Tibial artery (tissue), 4 donors: ENCODE measurements at regions of chr7 and their contacts with region 1.

Region 1: GRCh38 chr7:12434009-12434642 is 30.5 kb upstream of the VWDE start:
- DNase-seq: no peak
- H3K4me3 ChIP-seq: no peak overlapping the region
- H3K27ac ChIP-seq: no peak overlapping the region
- H3K4me1 ChIP-seq: no peaks in the 10 kb centered on the region
- H3K27me3 ChIP-seq: no peaks in the 10 kb centered on the region
- CTCF ChIP-seq: no peak

Region 2: DNA sequence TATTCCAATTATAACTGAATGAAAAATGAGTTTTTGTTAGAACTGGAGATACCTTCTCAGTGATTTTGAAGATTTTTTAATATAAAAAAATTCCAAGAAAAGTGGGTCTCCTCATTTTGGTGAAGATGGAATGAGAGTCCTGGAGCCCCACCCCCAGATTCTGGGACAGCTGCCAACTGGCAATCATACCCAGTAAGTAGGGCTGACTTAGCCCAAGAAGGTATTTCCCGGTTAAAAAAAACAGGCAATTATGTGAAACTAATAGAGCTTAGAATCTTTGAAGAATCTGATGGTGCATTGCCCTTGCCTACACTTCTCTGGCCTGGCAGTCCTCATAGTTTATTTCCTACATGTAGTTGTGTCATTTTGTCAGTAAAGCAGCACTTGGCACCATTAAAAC is 22.4 kb after region 1 on chr7:
- intact Hi-C with region 1: loop called (anchors 2 kb)
- DNase-seq: no peak
- H3K4me3 ChIP-seq: no peak overlapping the region
- H3K27ac ChIP-seq: no peak overlapping the region
- H3K4me1 ChIP-seq: no peaks in the 10 kb centered on the region
- H3K27me3 ChIP-seq: no peaks in the 10 kb centered on the region
- CTCF ChIP-seq: no peak

Region 3: DNA sequence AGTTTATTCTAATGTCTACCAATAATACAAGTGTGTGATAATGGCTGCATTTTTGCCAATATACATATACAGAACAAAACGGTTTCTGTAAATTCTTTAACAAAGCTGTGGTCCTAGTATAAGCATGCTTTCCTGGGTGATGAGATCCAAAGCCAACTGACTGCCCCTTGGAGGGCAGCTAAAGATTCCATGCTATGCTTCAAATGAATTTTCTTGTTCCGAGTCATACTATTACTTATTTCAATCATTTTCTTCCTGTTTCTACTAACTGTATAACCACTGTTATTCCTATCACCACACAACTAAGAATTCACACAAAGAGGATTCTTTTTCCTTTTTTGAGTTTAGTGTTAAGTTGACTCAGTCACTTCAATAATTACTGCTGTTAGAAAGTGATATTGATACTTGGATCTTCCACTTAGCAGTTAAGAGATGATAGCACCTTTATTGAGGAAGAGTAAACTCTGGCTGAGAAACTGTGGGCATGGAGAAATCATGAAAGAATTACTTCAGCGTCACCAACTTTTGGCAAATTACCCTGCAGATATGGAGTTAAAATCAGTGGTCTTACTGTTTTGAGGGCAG is 450.8 kb after region 1 on chr7:
- intact Hi-C with region 1: no loop called
- DNase-seq: no peak
- H3K4me3 ChIP-seq: no peak overlapping the region
- H3K27ac ChIP-seq: no peak overlapping the region
- H3K4me1 ChIP-seq: peaks cover 0 to 10% (median 2%) of the 10 kb centered on the region in 4 donors
- H3K27me3 ChIP-seq: no peaks in the 10 kb centered on the region
- CTCF ChIP-seq: no peak